Activated naive CD8-positive, alpha-beta T cell treated with anti-CD3 and anti-CD28 coated beads, Interleukin-2, amount 10 ng/mL, durations not matched to agents 7 days and 5 days (primary cell): ENCODE measurements at regions of chr19 and their contacts with region 1.

Region 1: DNA sequence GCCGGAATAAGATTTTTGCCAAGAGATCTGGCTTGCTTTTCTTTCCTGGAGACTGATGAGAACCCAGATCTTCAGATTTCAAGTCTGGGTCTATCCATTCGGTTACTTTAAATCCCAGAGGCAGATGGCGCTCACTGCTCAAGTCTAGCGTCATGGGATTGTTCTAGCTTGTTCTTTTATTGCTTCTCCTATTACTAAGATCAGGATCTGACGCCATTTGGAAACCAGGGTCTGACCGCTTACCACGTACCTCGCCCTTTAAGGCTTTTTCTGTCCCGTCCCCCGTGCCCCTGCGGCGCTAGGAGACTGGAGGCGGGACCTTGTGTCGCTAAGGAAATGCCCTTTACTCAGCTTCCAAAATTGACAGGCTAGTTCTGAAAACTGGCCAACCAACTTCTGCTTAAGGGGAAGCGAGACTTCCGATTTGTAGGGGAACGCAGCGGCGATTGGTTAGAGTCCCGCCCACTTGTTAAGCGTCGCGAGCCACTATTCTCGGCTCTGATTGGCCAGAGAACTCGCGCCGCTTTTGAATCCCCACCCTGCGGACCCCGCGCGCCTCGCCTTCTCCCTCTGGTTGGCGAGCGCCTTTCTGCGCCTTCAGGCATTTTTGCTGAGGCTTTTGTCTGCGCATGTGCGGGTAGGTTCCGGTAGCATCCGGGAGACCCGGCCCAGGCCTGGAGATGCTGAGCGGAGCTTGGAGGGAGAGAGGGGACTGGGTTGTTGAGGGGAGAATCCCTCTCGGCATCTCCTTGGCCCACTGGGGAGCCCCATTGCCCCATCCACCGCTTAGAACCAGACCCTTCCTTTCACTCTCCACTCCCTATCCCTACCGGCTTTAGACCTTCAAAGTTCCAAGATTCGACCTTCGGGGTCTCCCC is 3.8 kb upstream of the C19orf84 start:
- DNase-seq: peak; percentile 93
- ATAC-seq: peak; percentile 88
- H3K4me3 Mint-ChIP-seq: peak overlapping the region; percentile 94
- H3K27ac Mint-ChIP-seq: peak overlapping the region; percentile 97
- H3K4me1 Mint-ChIP-seq: peaks cover 36% of the 10 kb centered on the region
- H3K27me3 Mint-ChIP-seq: no peaks in the 10 kb centered on the region

Region 2: DNA sequence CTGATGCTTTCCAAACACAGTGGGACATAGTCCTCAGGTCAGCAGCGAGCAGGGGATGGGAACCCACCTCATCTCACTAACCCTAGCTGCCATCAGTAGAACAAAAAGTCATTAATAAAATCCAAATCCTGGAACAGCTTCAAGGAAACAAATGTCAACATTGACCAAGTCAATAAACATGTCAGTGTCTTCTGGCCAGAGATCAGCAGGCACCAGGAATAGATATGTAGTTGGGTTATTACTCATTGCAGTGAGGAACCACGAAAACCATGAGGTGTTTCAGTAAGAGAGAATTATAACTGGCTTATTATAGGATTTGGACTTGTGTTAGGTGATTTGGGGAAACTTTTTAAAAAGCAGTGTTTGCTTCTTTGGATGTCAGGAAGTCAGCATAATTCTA is 186.5 kb before region 1 on chr19:
- POLR2A ChIA-PET with region 1: no interaction called
- DNase-seq: no peak
- ATAC-seq: no peak
- H3K4me3 Mint-ChIP-seq: no peak overlapping the region
- H3K27ac Mint-ChIP-seq: no peak overlapping the region
- H3K4me1 Mint-ChIP-seq: peaks cover 19% of the 10 kb centered on the region
- H3K27me3 Mint-ChIP-seq: peaks cover 55% of the 10 kb centered on the region

Region 3: GRCh38 chr19:51294211-51294976 is 99.8 kb before region 1 on chr19:
- POLR2A ChIA-PET with region 1: no interaction called
- DNase-seq: no peak
- ATAC-seq: no peak
- H3K4me3 Mint-ChIP-seq: no peak overlapping the region
- H3K27ac Mint-ChIP-seq: no peak overlapping the region
- H3K4me1 Mint-ChIP-seq: no peaks in the 10 kb centered on the region
- H3K27me3 Mint-ChIP-seq: peaks cover 2% of the 10 kb centered on the region

Region 4: GRCh38 chr19:51339687-51340656 is 54.2 kb before region 1 on chr19:
- POLR2A ChIA-PET with region 1: interaction called, 12 read pairs
- DNase-seq: peak; percentile 93
- ATAC-seq: peak; percentile 67
- H3K4me3 Mint-ChIP-seq: peak overlapping the region; percentile 97
- H3K27ac Mint-ChIP-seq: peak overlapping the region; percentile 83
- H3K4me1 Mint-ChIP-seq: peaks cover 18% of the 10 kb centered on the region
- H3K27me3 Mint-ChIP-seq: peaks cover 13% of the 10 kb centered on the region

Region 5: GRCh38 chr19:51361239-51361638 is 33.0 kb before region 1 on chr19:
- POLR2A ChIA-PET with region 1: interaction called, 17 read pairs
- DNase-seq: no peak
- ATAC-seq: no peak
- H3K4me3 Mint-ChIP-seq: no peak overlapping the region
- H3K27ac Mint-ChIP-seq: no peak overlapping the region
- H3K4me1 Mint-ChIP-seq: peaks cover 47% of the 10 kb centered on the region
- H3K27me3 Mint-ChIP-seq: no peaks in the 10 kb centered on the region

Region 6: GRCh38 chr19:51367565-51368365 is 26.4 kb before region 1 on chr19:
- POLR2A ChIA-PET with region 1: interaction called, 85 read pairs
- DNase-seq: peak; percentile 96
- ATAC-seq: peak; percentile 73
- H3K4me3 Mint-ChIP-seq: peak overlapping the region; percentile 94
- H3K27ac Mint-ChIP-seq: peak overlapping the region; percentile 94
- H3K4me1 Mint-ChIP-seq: peaks cover 53% of the 10 kb centered on the region
- H3K27me3 Mint-ChIP-seq: no peaks in the 10 kb centered on the region

Region 7: DNA sequence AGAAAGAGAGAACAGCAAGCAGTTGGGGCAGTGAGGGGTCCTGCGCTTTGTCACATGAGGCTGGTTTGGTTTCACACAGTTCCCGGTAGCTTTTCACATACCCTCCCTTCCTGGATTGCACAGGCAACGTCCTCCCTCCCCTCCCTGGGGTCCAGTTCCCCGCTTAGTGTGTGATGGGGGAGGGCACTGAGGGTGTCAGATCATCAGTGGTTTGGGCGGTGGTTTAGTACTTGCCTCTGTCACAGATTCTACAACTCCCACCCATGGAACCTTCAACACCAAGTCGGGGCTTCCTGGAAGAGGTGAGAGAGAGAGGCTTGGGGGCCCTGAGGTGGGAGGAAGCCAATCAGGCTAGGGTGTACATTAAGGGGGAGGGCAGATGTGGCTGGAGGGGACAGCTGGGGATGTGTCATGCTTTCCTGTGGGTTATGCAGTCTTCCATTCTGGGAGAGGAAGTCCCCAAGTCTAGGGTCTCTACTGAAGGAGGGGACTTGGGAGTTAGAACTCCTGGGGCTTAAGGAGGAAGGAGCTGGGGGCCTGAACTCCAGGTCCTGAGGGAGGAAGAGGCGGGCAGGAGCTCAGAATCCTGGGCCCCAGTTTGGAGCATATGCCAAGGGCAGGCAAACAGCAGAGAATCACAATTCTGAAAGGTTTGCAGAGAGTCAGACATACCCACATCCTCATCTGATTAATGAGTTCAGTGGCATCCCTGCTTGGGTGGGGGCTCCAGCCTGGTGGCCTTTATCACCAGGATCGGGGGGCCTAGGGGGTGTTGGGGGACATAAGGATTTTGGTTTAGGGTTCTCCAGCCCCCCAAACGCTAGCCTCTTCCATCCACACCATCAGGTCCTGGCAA is 21.3 kb before region 1 on chr19 and contains the start of gene NKG7:
- POLR2A ChIA-PET with region 1: interaction called, 85 read pairs
- DNase-seq: peak; percentile 79
- ATAC-seq: peak; percentile 84
- H3K4me3 Mint-ChIP-seq: peak within 1 kb of the TSS; percentile 85
- H3K27ac Mint-ChIP-seq: peak within 1 kb of the TSS; percentile 99
- H3K4me1 Mint-ChIP-seq: peaks cover 65% of the 10 kb centered on the region
- H3K27me3 Mint-ChIP-seq: no peaks in the 10 kb centered on the region
- total RNA-seq, gene NKG7: 263 TPM